Activated T-helper 2 cell treated with anti-CD3 and anti-CD28 coated beads, Interferon-gamma antibody, Interleukin-2, Interleukin-4, amounts not matched to agents 10 μg/mL and 5 μg/mL and 100 μg/mL, durations not matched to agents 14 hours and 24 hours and 36 hours (primary cell): ENCODE measurements at regions of chr3 and their contacts with region 1.

Region 1: GRCh38 chr3:20060974-20061685 is 20.9 kb downstream of the KAT2B start:
- DNase-seq: no peak
- H3K4me3 Mint-ChIP-seq: no peak overlapping the region
- H3K27ac Mint-ChIP-seq: peak overlapping the region; percentile 48
- H3K4me1 Mint-ChIP-seq: peaks cover 26% of the 10 kb centered on the region
- H3K27me3 Mint-ChIP-seq: peaks cover 3% of the 10 kb centered on the region

Region 2: DNA sequence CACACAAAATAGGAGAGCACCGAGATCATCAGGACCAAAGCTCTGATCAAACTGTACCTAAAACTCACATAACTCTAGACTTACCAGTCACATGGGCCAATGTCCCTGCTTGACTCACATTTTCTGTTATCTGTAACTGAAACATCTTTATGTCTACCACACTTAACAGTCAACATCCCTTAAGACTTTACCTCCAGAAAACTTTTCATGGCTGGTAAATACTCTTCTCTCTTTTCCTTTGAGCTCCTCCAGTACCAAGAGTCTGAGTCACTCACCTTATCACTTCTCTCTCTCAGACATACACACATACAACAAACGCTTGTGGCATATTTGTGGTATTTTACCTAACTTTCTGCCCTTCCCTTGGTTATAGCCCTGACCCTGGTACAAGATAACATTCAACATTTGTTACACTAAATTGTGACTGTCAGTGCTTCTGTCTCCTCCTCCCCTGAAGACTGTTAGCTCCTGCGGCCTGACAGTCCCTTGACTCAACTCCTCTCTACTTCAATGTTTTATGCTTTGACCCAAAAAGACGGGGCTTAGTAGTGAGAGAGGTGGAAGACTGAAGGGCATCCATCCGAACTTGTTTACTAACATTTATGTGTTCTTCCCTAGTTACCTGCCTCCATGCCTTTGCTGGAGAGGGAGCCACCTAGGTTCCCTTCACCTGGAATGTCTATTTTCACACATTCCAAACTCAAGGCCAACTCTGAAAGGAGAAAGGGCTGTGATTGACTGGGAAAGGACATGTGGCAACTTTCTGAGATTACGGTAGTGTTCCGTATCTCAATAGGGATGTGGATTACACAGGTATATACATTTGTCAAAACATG is 123.5 kb before region 1 on chr3:
- intact Hi-C with region 1: loop called (anchors 1 kb)
- DNase-seq: no peak
- H3K4me3 Mint-ChIP-seq: no peak overlapping the region
- H3K27ac Mint-ChIP-seq: peak overlapping the region; percentile 84
- H3K4me1 Mint-ChIP-seq: peaks cover 39% of the 10 kb centered on the region
- H3K27me3 Mint-ChIP-seq: peaks cover 6% of the 10 kb centered on the region

Region 3: GRCh38 chr3:20104167-20104661 is 43.1 kb after region 1 on chr3:
- intact Hi-C with region 1: loop called (anchors 1 kb)
- DNase-seq: peak; percentile 40
- H3K4me3 Mint-ChIP-seq: no peak overlapping the region
- H3K27ac Mint-ChIP-seq: peak overlapping the region; percentile 16
- H3K4me1 Mint-ChIP-seq: peaks cover 59% of the 10 kb centered on the region
- H3K27me3 Mint-ChIP-seq: no peaks in the 10 kb centered on the region

Region 4: DNA sequence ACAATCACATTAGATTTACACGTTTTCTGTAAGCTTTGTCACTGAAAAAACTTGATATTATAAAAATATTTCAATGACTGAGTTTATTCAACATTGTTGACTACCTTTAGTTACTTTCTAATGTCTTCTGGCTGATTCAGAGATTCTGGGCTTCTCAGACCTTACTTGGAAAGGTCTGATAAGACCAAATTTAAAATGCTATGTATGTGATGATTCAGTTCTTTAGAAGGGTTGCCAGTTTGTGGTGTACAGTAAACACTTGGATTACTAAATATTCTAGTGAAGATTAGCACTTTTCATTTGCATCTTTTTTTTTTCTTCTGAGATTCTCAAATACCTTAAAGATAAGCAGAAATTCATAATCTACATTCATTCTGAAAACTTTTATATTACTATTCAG is 75.1 kb after region 1 on chr3:
- intact Hi-C with region 1: loop called (anchors 2 kb)
- DNase-seq: no peak
- H3K4me3 Mint-ChIP-seq: no peak overlapping the region
- H3K27ac Mint-ChIP-seq: no peak overlapping the region
- H3K4me1 Mint-ChIP-seq: peaks cover 5% of the 10 kb centered on the region
- H3K27me3 Mint-ChIP-seq: no peaks in the 10 kb centered on the region